PC-3 (cell line): ENCODE measurements at regions of chr6 and their contacts with region 1.

Region 1: GRCh38 chr6:73032586-73032985 is 192.7 kb downstream of the KHDC1L start:
- DNase-seq: peak; percentile 85
- ATAC-seq: peak; percentile 35
- H3K4me3 ChIP-seq: no peak overlapping the region
- H3K27ac ChIP-seq: peak overlapping the region; percentile 99
- H3K4me1 ChIP-seq: peaks cover 56% of the 10 kb centered on the region
- H3K27me3 ChIP-seq: no peaks in the 10 kb centered on the region
- CTCF ChIP-seq: no peak

Region 2: GRCh38 chr6:72894091-72894490 is 138.5 kb before region 1 on chr6:
- CTCF ChIA-PET with region 1: no interaction called
- POLR2A ChIA-PET with region 1: no interaction called
- intact Hi-C with region 1: loop called (anchors 10 kb)
- DNase-seq: peak; percentile 79
- ATAC-seq: peak; percentile 92
- H3K4me3 ChIP-seq: no peak overlapping the region
- H3K27ac ChIP-seq: no peak overlapping the region
- H3K4me1 ChIP-seq: peaks cover 12% of the 10 kb centered on the region
- H3K27me3 ChIP-seq: no peaks in the 10 kb centered on the region
- CTCF ChIP-seq: no peak

Region 3: DNA sequence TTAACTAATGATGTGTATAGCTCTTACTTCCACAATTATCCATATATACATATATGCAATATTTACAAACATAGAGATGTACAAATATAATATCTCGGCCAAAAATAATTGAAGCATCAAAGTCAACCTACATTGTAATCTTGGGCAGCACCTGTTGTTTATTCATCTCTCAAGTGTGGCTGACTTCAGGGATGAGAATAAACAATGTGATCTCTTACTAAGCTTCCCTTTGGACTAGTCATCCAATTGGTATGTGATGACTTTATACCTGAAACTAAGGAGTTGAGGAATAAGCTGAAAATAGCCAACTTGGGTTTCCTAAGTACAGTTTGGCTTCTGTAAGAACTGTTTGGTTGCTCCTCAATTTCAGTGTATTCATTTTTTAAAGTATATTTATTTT is 63.9 kb before region 1 on chr6:
- CTCF ChIA-PET with region 1: no interaction called
- POLR2A ChIA-PET with region 1: no interaction called
- intact Hi-C with region 1: loop called (anchors 2 kb)
- DNase-seq: peak; percentile 90
- ATAC-seq: peak; percentile 79
- H3K4me3 ChIP-seq: no peak overlapping the region
- H3K27ac ChIP-seq: peak overlapping the region; percentile 56
- H3K4me1 ChIP-seq: peaks cover 42% of the 10 kb centered on the region
- H3K27me3 ChIP-seq: no peaks in the 10 kb centered on the region
- CTCF ChIP-seq: no peak

Region 4: GRCh38 chr6:73074175-73074574 is 41.6 kb after region 1 on chr6:
- CTCF ChIA-PET with region 1: no interaction called
- POLR2A ChIA-PET with region 1: no interaction called
- intact Hi-C with region 1: loop called (anchors 1 kb)
- DNase-seq: peak; percentile 91
- ATAC-seq: peak; percentile 83
- H3K4me3 ChIP-seq: no peak overlapping the region
- H3K27ac ChIP-seq: peak overlapping the region; percentile 95
- H3K4me1 ChIP-seq: peaks cover 53% of the 10 kb centered on the region
- H3K27me3 ChIP-seq: no peaks in the 10 kb centered on the region
- CTCF ChIP-seq: no peak

Region 5: DNA sequence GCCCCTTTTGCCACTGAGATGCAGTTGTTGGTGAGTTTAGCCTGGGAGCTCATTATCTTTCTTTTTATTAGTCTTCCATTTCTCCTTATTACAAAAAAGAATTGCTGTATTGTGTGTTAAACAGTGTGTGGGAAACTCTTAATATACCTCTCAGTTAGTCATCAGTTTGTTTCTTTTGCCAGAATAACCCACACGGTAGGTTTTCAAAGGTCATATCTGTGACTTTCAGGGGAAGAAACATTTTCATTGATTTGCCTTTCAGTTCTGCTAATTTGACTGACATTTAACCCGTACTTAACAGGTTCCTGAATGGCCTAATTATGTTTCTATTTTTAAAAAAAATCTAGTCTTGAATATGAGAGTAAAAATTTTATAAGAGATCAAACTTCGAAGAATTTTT is 47.4 kb after region 1 on chr6:
- CTCF ChIA-PET with region 1: no interaction called
- POLR2A ChIA-PET with region 1: no interaction called
- intact Hi-C with region 1: loop called (anchors 1 kb)
- DNase-seq: peak; percentile 66
- ATAC-seq: peak; percentile 59
- H3K4me3 ChIP-seq: peak overlapping the region; percentile 45; the same call in 1 of the 2 replicates
- H3K27ac ChIP-seq: peak overlapping the region; percentile 100
- H3K4me1 ChIP-seq: peaks cover 54% of the 10 kb centered on the region
- H3K27me3 ChIP-seq: no peaks in the 10 kb centered on the region
- CTCF ChIP-seq: no peak